AG04450 (cell line): ENCODE measurements at regions of chr1 and their contacts with region 1.

Region 1: GRCh38 chr1:185767508-185768120 is 33.4 kb downstream of the HMCN1 start:
- DNase-seq: no peak
- H3K4me3 ChIP-seq: no peak overlapping the region
- H3K27ac ChIP-seq: no peak overlapping the region
- H3K27me3 ChIP-seq: no peaks in the 10 kb centered on the region
- CTCF ChIP-seq: no peak

Region 2: DNA sequence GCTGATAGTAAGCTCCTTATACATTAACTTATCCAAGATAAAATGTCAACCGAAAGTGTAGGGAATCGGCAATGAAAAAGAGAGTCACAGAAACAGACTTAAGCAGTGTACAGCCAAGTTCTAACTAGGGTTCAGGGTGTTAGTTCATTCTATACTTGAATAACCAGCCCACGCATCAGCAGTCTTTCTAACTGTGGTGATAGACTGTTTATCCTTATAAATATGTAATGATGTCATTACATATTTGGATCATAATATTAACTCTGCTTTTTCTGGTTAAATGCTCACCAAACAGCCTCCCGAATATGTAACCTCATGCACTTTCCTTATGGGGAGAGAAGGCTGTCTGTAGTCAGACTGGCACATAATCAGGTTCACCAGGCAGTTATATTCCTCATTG is 22.4 kb before region 1 on chr1:
- CTCF ChIA-PET with region 1: interaction called, 15 read pairs
- POLR2A ChIA-PET with region 1: no interaction called
- DNase-seq: no peak
- H3K4me3 ChIP-seq: no peak overlapping the region
- H3K27ac ChIP-seq: no peak overlapping the region
- H3K27me3 ChIP-seq: no peaks in the 10 kb centered on the region
- CTCF ChIP-seq: no peak